ENCODE measurements at regions of chr20 and their contacts with region 1.

Region 1: DNA sequence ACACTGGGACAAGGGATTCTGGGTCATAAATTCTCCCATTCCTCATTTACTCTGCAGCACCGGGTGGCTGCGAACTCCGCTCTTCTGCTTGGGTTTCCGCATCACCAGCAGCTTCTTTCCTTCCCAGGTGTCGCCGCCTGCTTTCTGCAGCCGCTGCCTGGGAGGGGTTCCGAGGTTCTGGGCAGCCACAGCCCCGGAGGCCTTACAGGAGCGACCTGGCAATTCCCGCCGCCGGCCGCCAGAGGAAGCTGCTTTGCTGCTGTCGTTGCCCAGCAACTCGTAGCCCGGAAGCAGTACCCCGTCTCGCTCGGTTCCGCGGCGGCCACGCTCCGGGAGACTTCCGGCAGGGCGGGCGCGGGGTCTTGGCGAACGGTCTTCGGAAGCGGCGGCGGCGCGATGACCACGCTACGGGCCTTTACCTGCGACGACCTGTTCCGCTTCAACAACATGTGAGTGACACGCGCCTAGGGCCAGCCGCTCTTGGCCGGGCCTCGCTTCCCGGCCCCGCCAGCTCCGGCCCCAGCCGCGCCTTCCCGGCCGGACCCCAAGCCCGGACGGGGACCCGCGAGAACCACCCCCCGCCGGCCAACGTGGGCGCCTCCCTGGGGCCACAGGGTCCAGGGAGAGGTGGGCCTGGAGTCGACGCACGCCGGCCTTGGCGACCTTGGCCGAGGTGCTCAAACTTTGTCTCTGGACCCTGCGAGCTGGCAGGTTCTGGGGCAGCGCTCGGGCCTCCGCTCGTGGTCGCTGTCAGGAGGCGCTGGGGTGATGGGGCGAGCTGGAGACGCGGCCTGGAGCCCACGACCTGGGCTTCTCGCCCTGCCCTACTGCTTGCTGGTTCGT is at the start of gene NAA20:
- DNase-seq: no peak
- H3K4me3 ChIP-seq: peak within 1 kb of the TSS; percentile 88
- CTCF ChIP-seq: peak; percentile 89

Region 2: GRCh38 chr20:20003031-20003954 is 13.9 kb before region 1 on chr20:
- CTCF ChIA-PET with region 1: interaction called, 19 read pairs
- POLR2A ChIA-PET with region 1: no interaction called
- DNase-seq: no peak
- H3K4me3 ChIP-seq: no peak overlapping the region
- CTCF ChIP-seq: no peak

Region 3: GRCh38 chr20:20027284-20027683 is 10.1 kb after region 1 on chr20:
- CTCF ChIA-PET with region 1: interaction called, 14 read pairs
- POLR2A ChIA-PET with region 1: no interaction called
- DNase-seq: no peak
- H3K4me3 ChIP-seq: no peak overlapping the region
- CTCF ChIP-seq: no peak

Region 4: GRCh38 chr20:20070871-20071726 is 53.9 kb after region 1 on chr20:
- CTCF ChIA-PET with region 1: no interaction called
- POLR2A ChIA-PET with region 1: no interaction called
- DNase-seq: no peak
- H3K4me3 ChIP-seq: no peak overlapping the region
- CTCF ChIP-seq: no peak

Measured in AG04449 (cell line).